ENCODE measurements at regions of chr20 and their contacts with region 1.

Region 1: DNA sequence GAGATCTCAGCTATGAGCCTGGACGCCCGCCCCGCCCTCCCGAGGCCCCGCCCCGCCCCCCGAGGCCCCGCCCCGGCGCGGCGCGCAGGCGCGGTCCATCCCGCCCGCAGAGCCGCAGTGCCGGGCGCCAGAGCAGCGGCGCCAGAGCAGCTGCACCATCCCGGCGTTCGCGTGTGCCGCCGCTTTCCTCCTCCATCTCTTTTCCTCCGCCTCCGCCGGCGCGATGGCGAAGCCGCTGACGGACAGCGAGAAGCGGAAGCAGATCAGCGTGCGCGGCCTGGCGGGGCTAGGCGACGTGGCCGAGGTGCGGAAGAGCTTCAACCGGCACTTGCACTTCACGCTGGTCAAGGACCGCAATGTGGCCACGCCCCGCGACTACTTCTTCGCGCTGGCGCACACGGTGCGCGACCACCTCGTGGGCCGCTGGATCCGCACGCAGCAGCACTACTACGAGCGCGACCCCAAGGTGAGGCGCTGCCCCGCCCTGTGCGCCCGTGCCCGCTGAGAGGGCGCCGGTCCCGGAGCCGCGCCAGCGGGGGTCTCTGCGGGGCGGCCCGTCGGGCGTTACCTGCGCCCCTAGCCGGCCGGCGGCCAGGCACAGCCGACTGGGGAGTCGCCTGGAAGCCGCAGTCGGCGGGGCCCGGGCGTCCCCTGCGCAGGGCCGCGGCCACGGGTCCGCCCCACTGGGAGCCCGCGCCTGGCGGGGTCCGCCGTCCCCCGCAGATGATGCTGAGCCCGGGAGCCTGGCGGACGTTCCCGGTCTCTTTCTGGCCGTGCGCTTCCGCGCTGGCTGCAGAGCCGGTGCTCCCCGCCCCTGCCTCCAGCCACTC is at the start of gene PYGB:
- DNase-seq: peak; percentile 84
- ATAC-seq: peak; percentile 87
- H3K4me3 ChIP-seq: peak within 1 kb of the TSS; percentile 11 to 96 (median 88)
- H3K4me3 Mint-ChIP-seq: peak within 1 kb of the TSS; percentile 96
- H3K27ac ChIP-seq: peak within 1 kb of the TSS in 1 of 2 donors; percentile 55
- H3K27ac Mint-ChIP-seq: peak within 1 kb of the TSS; percentile 88
- H3K4me1 ChIP-seq: peaks cover 18 to 21% of the 10 kb centered on the region in 2 donors
- H3K4me1 Mint-ChIP-seq: peaks cover 31% of the 10 kb centered on the region
- H3K27me3 ChIP-seq: peaks cover 0 to 9% (median 3%) of the 10 kb centered on the region in 4 experiments
- H3K27me3 Mint-ChIP-seq: peaks cover 12% of the 10 kb centered on the region
- CTCF ChIP-seq: no peak
- total RNA-seq, gene PYGB: 30.6 and 30.8 TPM in 2 replicates

Region 2: GRCh38 chr20:23357767-23358591 is 1890.2 kb before region 1 on chr20:
- CTCF ChIA-PET with region 1: no interaction called
- POLR2A ChIA-PET with region 1: no interaction called
- intact Hi-C with region 1: loop called (anchors 5 kb)
- DNase-seq: peak; percentile 100
- ATAC-seq: peak; percentile 75
- H3K4me3 ChIP-seq: peak overlapping the region; percentile 68 to 88 (median 83)
- H3K4me3 Mint-ChIP-seq: peak overlapping the region; percentile 94
- H3K27ac ChIP-seq: peak overlapping the region; percentile 94 to 98
- H3K27ac Mint-ChIP-seq: peak overlapping the region; percentile 97
- H3K4me1 ChIP-seq: peaks cover 20 to 33% of the 10 kb centered on the region in 2 donors
- H3K4me1 Mint-ChIP-seq: peaks cover 33% of the 10 kb centered on the region
- H3K27me3 ChIP-seq: no peaks in the 10 kb centered on the region
- H3K27me3 Mint-ChIP-seq: no peaks in the 10 kb centered on the region
- CTCF ChIP-seq: no peak

Region 3: GRCh38 chr20:25195014-25195961 is 52.9 kb before region 1 on chr20 and contains the start of gene ENTPD6:
- CTCF ChIA-PET with region 1: interaction called, 7 read pairs
- POLR2A ChIA-PET with region 1: no interaction called
- intact Hi-C with region 1: loop called (anchors 1 kb)
- DNase-seq: peak; percentile 95
- ATAC-seq: peak; percentile 85
- H3K4me3 ChIP-seq: peak within 1 kb of the TSS; percentile 55 to 91 (median 88)
- H3K4me3 Mint-ChIP-seq: peak within 1 kb of the TSS; percentile 94
- H3K27ac ChIP-seq: peak within 1 kb of the TSS; percentile 63 to 86
- H3K27ac Mint-ChIP-seq: peak within 1 kb of the TSS; percentile 92
- H3K4me1 ChIP-seq: peaks cover 15 to 24% of the 10 kb centered on the region in 2 donors
- H3K4me1 Mint-ChIP-seq: peaks cover 37% of the 10 kb centered on the region
- H3K27me3 ChIP-seq: no peaks in the 10 kb centered on the region
- H3K27me3 Mint-ChIP-seq: peaks cover 1% of the 10 kb centered on the region
- CTCF ChIP-seq: no peak
- total RNA-seq, gene ENTPD6: 64.4 and 71.3 TPM in 2 replicates

Region 4: GRCh38 chr20:25289886-25290577 is 41.9 kb after region 1 on chr20:
- CTCF ChIA-PET with region 1: no interaction called
- POLR2A ChIA-PET with region 1: no interaction called
- intact Hi-C with region 1: no loop called
- DNase-seq: no peak
- ATAC-seq: no peak
- H3K4me3 ChIP-seq: no peak overlapping the region
- H3K4me3 Mint-ChIP-seq: no peak overlapping the region
- H3K27ac ChIP-seq: no peak overlapping the region
- H3K27ac Mint-ChIP-seq: no peak overlapping the region
- H3K4me1 ChIP-seq: peaks cover 0 to 12% of the 10 kb centered on the region in 2 donors
- H3K4me1 Mint-ChIP-seq: peaks cover 9% of the 10 kb centered on the region
- H3K27me3 ChIP-seq: no peaks in the 10 kb centered on the region
- H3K27me3 Mint-ChIP-seq: no peaks in the 10 kb centered on the region
- CTCF ChIP-seq: no peak

Region 5: DNA sequence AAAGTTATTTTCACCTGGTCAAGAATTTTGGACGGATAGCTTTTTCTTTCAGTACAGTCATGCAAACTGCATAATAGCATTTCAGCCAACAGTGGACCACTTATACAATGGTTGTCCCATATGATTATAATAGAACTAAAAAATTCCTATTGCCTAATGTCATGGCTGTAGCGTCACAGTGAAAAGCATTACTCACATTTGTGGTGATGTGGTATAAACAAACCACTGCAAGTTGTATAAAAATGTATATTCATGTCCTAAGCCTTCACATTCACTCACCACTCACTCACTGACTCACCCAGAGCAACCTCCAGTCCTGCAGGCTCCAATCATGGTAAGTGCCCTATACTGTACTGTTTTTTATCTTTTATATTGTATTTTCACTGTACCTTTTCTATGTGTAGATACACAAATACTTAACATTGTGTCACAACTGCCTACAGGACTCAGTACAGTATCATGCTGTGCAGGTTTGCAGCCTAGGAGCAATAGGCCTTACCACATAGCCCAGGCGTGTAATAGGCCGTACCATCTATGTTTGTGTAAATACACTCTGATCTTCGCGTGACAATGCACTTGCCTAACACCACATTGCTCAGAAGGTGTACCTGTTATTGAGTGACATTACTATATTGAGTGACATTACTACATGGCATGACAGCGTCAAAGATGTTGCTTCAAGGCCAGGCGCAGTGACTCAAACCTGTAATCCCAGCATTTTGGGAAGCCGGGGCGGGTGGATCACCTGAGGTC is 124.6 kb after region 1 on chr20:
- CTCF ChIA-PET with region 1: no interaction called
- POLR2A ChIA-PET with region 1: no interaction called
- intact Hi-C with region 1: no loop called
- DNase-seq: no peak
- ATAC-seq: no peak
- H3K4me3 ChIP-seq: no peak overlapping the region
- H3K4me3 Mint-ChIP-seq: no peak overlapping the region
- H3K27ac ChIP-seq: no peak overlapping the region
- H3K27ac Mint-ChIP-seq: no peak overlapping the region
- H3K4me1 ChIP-seq: no peaks in the 10 kb centered on the region
- H3K4me1 Mint-ChIP-seq: peaks cover 10% of the 10 kb centered on the region
- H3K27me3 ChIP-seq: no peaks in the 10 kb centered on the region
- H3K27me3 Mint-ChIP-seq: no peaks in the 10 kb centered on the region
- CTCF ChIP-seq: no peak

Region 6: DNA sequence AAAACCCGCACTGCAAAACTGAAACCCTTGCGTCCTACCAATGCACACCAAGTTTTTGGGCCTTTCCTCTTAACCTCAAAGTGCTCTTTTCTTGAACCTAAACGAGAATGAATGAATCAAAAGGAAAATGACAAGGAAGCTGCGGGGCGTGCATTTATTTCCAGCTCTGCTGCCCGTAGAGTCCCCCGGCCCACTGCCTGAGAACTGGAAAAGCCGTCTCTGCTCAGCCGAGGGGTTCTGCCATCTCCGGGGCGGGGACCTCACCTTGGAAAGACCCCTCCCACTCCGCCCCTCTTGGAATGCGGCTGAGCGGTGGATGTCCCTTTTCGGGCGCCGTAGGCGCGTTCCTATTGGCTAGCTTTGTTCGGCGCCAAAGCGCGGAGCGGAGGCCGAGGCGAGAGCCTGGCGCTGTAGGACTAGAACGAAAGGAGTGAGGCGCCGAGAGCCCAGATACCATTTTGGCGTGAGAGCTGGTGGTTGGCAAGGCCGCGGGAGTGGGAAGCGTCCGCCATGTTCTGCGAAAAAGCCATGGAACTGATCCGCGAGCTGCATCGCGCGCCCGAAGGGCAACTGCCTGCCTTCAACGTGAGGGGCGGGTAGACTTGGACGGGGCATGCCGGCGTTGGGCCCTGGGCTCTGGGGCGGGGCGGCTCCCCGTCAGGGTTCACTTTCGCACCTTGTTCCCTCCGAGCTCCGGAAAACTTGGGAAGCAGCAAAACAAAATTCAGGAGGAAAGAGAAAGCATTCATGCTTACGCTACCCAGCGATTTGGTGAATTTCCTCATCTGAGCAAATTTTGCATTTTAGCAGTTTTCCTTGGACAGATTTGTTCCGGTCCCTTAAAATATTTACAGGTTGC is 159.4 kb after region 1 on chr20 and contains the start of gene GINS1:
- CTCF ChIA-PET with region 1: no interaction called
- POLR2A ChIA-PET with region 1: no interaction called
- intact Hi-C with region 1: loop called (anchors 5 kb)
- DNase-seq: peak; percentile 83
- ATAC-seq: peak; percentile 95
- H3K4me3 ChIP-seq: peak within 1 kb of the TSS; percentile 71 to 80 (median 74)
- H3K4me3 Mint-ChIP-seq: peak within 1 kb of the TSS; percentile 95
- H3K27ac ChIP-seq: peak within 1 kb of the TSS in 1 of 2 donors; percentile 69
- H3K27ac Mint-ChIP-seq: peak within 1 kb of the TSS; percentile 85
- H3K4me1 ChIP-seq: peaks cover 5 to 6% of the 10 kb centered on the region in 2 donors
- H3K4me1 Mint-ChIP-seq: peaks cover 12% of the 10 kb centered on the region
- H3K27me3 ChIP-seq: no peaks in the 10 kb centered on the region
- H3K27me3 Mint-ChIP-seq: no peaks in the 10 kb centered on the region
- CTCF ChIP-seq: no peak
- total RNA-seq, gene GINS1: 2.0 and 3.6 TPM in 2 replicates

Region 7: DNA sequence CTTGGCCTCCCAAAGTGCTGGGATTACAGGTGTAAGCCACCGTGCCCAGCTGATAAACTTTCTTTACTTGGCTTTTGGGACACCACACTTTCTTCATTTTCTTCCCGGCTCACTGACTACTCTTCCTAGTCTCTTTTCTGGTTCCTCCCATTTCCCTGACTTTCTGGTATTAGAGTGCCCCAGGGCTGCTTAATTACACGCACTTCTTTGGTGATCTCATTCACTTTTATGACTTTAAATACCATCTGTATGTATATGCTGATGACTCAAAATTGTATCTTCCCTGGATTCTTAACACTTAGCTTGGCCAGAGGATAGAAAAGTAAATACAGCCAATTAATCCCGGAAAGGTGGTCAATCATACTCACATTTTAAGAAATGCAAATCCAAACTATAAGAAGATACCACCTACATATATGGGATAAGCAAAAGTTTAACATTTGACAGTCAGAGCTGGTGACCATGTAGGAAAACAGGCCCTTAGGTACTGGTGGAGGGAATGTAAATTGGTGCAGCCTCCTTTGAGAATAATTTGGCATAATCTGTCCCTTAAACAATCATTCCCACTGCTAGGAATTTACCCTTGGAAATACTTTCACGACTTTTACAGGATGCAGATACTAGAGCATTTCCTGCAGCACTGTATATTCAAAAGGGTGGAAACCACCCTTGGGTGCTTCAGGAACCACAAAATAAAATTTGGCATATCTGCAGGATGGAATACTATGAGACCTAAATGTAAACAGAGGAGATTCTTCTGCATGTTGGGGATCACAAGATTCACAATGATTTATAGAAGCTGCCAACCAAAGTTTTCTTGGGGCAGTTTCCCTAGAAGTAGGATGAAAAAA is 385.0 kb after region 1 on chr20:
- CTCF ChIA-PET with region 1: no interaction called
- POLR2A ChIA-PET with region 1: no interaction called
- intact Hi-C with region 1: no loop called
- DNase-seq: no peak
- ATAC-seq: no peak
- H3K4me3 ChIP-seq: no peak overlapping the region
- H3K4me3 Mint-ChIP-seq: no peak overlapping the region
- H3K27ac ChIP-seq: no peak overlapping the region
- H3K27ac Mint-ChIP-seq: no peak overlapping the region
- H3K4me1 ChIP-seq: no peaks in the 10 kb centered on the region
- H3K4me1 Mint-ChIP-seq: no peaks in the 10 kb centered on the region
- H3K27me3 ChIP-seq: no peaks in the 10 kb centered on the region
- H3K27me3 Mint-ChIP-seq: no peaks in the 10 kb centered on the region
- CTCF ChIP-seq: no peak

Region 8: GRCh38 chr20:25696384-25697131 is 448.4 kb after region 1 on chr20 and contains the start of gene ZNF337:
- CTCF ChIA-PET with region 1: no interaction called
- POLR2A ChIA-PET with region 1: no interaction called
- intact Hi-C with region 1: loop called (anchors 1 kb)
- DNase-seq: peak; percentile 93
- ATAC-seq: peak; percentile 97
- H3K4me3 ChIP-seq: peak within 1 kb of the TSS; percentile 34 to 92 (median 84)
- H3K4me3 Mint-ChIP-seq: peak within 1 kb of the TSS; percentile 96
- H3K27ac ChIP-seq: peak within 1 kb of the TSS; percentile 71 to 90
- H3K27ac Mint-ChIP-seq: peak within 1 kb of the TSS; percentile 93
- H3K4me1 ChIP-seq: peaks cover 4 to 7% of the 10 kb centered on the region in 2 donors
- H3K4me1 Mint-ChIP-seq: peaks cover 26% of the 10 kb centered on the region
- H3K27me3 ChIP-seq: no peaks in the 10 kb centered on the region
- H3K27me3 Mint-ChIP-seq: no peaks in the 10 kb centered on the region
- CTCF ChIP-seq: no peak
- total RNA-seq, gene ZNF337: 24.7 and 27.1 TPM in 2 replicates